ENCODE measurements at regions of chr19 and their contacts with region 1.

Region 1: DNA sequence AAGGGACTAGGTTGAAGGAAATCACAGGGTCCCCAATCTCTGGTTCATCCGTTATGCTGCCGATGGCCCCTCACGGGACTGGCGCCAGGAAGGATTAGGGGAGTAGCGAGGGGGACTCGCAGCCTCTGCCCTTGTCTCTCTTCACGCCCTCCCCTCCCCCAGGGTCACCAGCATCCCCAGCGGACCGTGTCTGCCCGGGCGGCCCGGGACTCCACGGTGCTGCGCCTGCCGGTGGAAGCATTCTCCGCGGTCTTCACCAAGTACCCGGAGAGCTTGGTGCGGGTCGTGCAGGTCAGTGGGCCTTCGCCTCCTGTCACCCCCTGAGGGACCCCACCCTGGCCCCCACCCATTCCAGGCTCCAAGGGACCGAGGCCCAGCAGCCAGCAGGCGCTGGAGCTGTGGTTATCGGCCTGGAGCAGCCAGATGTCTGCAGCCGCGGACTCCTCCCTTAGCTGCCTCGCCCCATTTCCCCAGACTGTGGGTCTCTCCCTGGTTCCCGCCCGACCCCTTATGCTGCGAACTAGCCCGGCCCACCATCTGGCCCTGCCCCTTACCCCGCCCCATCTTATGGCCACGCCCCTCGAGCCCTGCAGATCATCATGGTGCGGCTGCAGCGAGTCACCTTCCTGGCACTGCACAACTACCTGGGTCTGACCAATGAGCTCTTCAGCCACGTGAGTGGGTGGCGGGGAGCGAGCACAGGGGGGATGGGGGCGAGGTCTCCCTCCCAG is 5.4 kb downstream of the PNPLA6 start:
- DNase-seq: peak; percentile 56 to 92
- H3K4me3 ChIP-seq: no peak overlapping the region
- H3K27ac ChIP-seq: no peak overlapping the region
- H3K4me1 ChIP-seq: peaks cover 0 to 2% (median 1%) of the 10 kb centered on the region in 4 experiments; a peak in 2 of 7 replicates
- H3K27me3 ChIP-seq: no peaks in the 10 kb centered on the region
- CTCF ChIP-seq: no peak
- EP300 ChIP-seq: no peak
- POLR2A ChIP-seq: no peak
- RAD21 ChIP-seq: no peak

Region 2: DNA sequence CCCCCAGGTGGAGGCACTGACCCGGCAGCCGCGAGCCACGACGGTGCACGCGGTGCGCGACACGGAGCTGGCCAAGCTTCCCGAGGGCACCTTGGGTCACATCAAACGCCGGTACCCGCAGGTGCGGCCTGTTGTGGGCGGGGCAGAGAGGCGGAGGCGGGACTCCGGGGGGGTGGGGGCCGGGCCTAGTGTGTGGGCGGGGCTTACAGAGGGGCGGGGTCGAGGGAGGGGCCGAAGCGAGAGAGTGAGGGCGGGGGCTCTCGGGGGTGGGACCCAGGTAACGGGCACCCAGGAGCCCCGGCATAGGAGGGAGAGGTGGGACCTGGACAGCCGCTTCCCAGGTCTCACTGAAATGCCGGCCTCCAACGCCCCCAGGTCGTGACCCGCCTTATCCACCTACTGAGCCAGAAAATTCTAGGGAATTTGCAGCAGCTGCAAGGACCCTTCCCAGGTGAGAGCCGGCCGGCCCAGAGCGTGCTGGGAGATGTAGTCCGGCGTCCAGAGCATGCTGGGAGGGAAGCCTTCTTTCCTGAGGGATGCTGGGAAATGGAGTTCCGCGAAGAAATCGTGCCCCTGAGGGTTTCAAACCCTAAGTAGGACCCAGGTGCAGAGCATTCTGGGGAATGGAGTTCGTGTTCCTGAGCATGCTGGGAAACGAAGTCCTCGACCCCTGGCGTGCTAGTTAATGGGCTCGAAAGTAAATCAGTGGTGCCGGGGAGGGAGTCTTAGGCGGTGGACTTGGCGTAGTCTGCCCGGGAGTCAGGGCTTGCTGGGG is 10.2 kb after region 1 on chr19:
- CTCF ChIA-PET with region 1: interaction called, 3 read pairs
- POLR2A ChIA-PET with region 1: interaction called, 10 read pairs
- DNase-seq: peak; percentile 93
- H3K4me3 ChIP-seq: peak overlapping the region in 3 of 4 experiments; percentile 39 to 63 (median 42); a peak in 7 of 8 replicates
- H3K27ac ChIP-seq: no peak overlapping the region
- H3K4me1 ChIP-seq: peaks cover 0 to 11% (median 8%) of the 10 kb centered on the region in 4 experiments; a peak in 5 of 7 replicates
- H3K27me3 ChIP-seq: no peaks in the 10 kb centered on the region
- CTCF ChIP-seq: no peak
- EP300 ChIP-seq: no peak
- POLR2A ChIP-seq: no peak
- RAD21 ChIP-seq: no peak

Measured in H1 (cell line).